RWPE1 (cell line): ENCODE measurements at regions of chr16 and their contacts with region 1.

Region 1: GRCh38 chr16:70348991-70349390 is 2.3 kb downstream of the DDX19A start:
- DNase-seq: no peak
- H3K27ac ChIP-seq: no peak overlapping the region
- CTCF ChIP-seq: no peak

Region 2: DNA sequence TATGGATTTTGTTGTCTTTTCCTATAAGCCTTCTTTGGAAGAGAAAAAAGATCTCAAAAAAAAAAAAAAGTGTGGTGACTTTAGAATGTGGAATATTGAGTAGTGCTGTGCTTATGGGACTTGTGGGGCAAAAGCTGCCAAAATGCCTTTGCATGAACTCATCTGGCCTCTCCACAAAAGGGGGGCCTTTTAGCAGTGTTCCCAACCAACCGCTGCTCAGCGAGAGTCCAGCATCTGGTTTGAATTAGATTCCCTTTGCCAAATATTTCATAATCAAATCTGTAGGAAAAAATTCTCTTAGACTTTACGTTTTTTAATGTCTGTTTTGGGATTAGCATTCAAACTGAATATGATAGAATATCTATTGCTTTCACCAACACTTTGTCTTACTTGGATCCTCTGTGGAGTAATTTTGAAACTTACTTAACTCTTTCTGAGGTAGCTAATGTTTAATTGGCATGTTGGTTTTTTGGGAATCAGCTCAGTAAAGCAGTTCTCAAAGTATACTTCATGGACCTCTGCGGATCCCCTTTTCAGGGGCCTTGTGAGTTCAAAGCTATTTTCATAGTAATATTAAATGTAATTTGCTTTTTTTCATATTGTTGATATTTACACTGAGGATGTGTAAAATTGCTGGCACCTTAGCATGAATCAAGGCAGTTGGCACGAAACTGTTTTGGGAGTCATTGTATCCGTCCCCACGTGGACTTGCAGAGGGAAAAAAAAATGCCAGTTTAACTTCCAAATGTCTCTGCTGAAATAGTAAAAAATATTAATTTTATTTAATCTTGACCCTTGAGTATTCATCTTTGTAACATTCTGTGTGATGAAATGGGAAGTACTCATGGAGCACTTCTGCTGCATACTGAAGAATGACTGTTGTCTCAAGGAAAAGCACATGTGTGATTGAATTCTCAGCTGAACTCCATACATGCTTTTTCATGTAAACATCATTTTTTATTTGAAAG is 1072.6 kb before region 1 on chr16:
- CTCF ChIA-PET with region 1: no interaction called
- POLR2A ChIA-PET with region 1: no interaction called
- DNase-seq: no peak
- H3K27ac ChIP-seq: no peak overlapping the region
- CTCF ChIP-seq: no peak

Region 3: GRCh38 chr16:70337814-70338213 is 11.2 kb before region 1 on chr16:
- CTCF ChIA-PET with region 1: no interaction called
- POLR2A ChIA-PET with region 1: no interaction called
- DNase-seq: no peak
- H3K27ac ChIP-seq: no peak overlapping the region
- CTCF ChIP-seq: no peak

Region 4: DNA sequence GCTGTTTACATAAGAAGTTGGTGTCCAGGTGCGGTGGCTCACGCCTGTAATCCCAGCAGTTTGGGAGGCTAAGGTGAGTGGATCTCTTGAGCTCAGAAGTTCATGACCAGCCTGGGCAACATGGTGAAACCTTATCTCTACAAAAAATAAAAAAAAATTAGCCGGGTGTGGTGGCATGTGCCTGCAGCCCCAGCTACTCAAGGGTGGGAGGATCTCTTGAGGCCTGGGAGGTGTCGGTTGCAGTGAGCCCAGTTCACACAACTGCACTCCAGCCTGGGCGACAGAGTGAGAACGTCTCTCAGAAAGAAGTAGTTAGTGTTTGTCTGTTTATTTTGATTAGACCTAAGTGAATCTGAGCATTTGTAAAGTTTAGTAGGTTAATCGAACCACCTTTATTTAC is 10.6 kb after region 1 on chr16:
- CTCF ChIA-PET with region 1: interaction called, 7 read pairs
- POLR2A ChIA-PET with region 1: interaction called, 12 read pairs
- DNase-seq: no peak
- H3K27ac ChIP-seq: no peak overlapping the region
- CTCF ChIP-seq: no peak